ENCODE measurements at regions of chr14 and their contacts with region 1.

Region 1: GRCh38 chr14:96051642-96052540 is 12.7 kb downstream of the C14orf132 start:
- DNase-seq: peak; percentile 12
- ATAC-seq: peak; percentile 85
- H3K4me3 ChIP-seq: no peak overlapping the region
- H3K27ac ChIP-seq: no peak overlapping the region
- H3K4me1 ChIP-seq: no peaks in the 10 kb centered on the region
- H3K27me3 ChIP-seq: no peaks in the 10 kb centered on the region
- CTCF ChIP-seq: peak; percentile 31 to 72 (median 70); a peak in 4 of 6 replicates
- POLR2A ChIP-seq: no peak
- RAD21 ChIP-seq: peak; percentile 50

Region 2: DNA sequence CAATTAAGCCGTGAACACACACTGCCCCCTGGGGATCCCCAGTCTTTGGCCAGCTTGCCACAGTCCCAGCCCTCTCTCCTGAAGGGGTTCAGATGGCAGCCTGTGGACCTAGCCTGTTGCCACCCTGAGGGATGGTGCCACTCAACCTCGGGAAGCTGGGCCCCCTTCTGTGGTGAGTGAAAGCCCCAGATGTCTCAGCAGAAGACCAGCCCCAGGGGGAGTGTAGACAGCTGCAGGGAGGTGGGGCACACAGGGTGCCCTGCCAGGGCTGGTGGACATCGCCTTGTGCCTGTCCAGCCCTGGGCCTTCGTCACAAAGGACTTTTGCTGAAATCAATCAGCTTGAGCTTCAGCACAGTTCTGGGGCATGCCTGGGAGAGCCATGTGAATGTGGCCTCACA is 19.7 kb after region 1 on chr14:
- CTCF ChIA-PET with region 1: no interaction called
- POLR2A ChIA-PET with region 1: no interaction called
- RAD21 ChIA-PET with region 1: no interaction called
- intact Hi-C with region 1: no loop called
- DNase-seq: no peak
- ATAC-seq: no peak
- H3K4me3 ChIP-seq: no peak overlapping the region
- H3K27ac ChIP-seq: no peak overlapping the region
- H3K4me1 ChIP-seq: no peaks in the 10 kb centered on the region
- H3K27me3 ChIP-seq: no peaks in the 10 kb centered on the region
- CTCF ChIP-seq: no peak
- POLR2A ChIP-seq: no peak
- RAD21 ChIP-seq: no peak

Region 3: GRCh38 chr14:96275177-96276112 is 223.6 kb after region 1 on chr14:
- CTCF ChIA-PET with region 1: interaction called, 4 read pairs
- POLR2A ChIA-PET with region 1: no interaction called
- RAD21 ChIA-PET with region 1: no interaction called
- intact Hi-C with region 1: loop called (anchors 1 kb)
- DNase-seq: peak; percentile 29
- ATAC-seq: peak; percentile 88
- H3K4me3 ChIP-seq: no peak overlapping the region
- H3K27ac ChIP-seq: no peak overlapping the region
- H3K4me1 ChIP-seq: no peaks in the 10 kb centered on the region
- H3K27me3 ChIP-seq: no peaks in the 10 kb centered on the region
- CTCF ChIP-seq: peak; percentile 92 to 95 (median 95)
- POLR2A ChIP-seq: no peak
- RAD21 ChIP-seq: peak; percentile 91

Measured in HCT116 (cell line).